Activated T-helper 1 cell treated with anti-CD3 and anti-CD28 coated beads, Interleukin-12 subunit alpha, Interleukin-12 subunit beta, Interleukin-2, Interleukin-4 antibody, amounts not matched to agents 30 ng/mL and 10 ng/mL and 1 ng/mL, durations not matched to agents 14 hours and 24 hours and 36 hours (primary cell): ENCODE measurements at regions of chr9 and their contacts with region 1.

Region 1: GRCh38 chr9:35603987-35604577 is 980 bp upstream of the TESK1 start:
- DNase-seq: peak; percentile 99
- H3K4me3 Mint-ChIP-seq: peak overlapping the region; percentile 91
- H3K27ac Mint-ChIP-seq: peak overlapping the region; percentile 99
- H3K4me1 Mint-ChIP-seq: peaks cover 34% of the 10 kb centered on the region
- H3K27me3 Mint-ChIP-seq: peaks cover 2% of the 10 kb centered on the region

Region 2: GRCh38 chr9:35481347-35481975 is 122.6 kb before region 1 on chr9:
- intact Hi-C with region 1: loop called (anchors 1 kb)
- DNase-seq: peak; percentile 12
- H3K4me3 Mint-ChIP-seq: no peak overlapping the region
- H3K27ac Mint-ChIP-seq: no peak overlapping the region
- H3K4me1 Mint-ChIP-seq: no peaks in the 10 kb centered on the region
- H3K27me3 Mint-ChIP-seq: peaks cover 7% of the 10 kb centered on the region

Region 3: DNA sequence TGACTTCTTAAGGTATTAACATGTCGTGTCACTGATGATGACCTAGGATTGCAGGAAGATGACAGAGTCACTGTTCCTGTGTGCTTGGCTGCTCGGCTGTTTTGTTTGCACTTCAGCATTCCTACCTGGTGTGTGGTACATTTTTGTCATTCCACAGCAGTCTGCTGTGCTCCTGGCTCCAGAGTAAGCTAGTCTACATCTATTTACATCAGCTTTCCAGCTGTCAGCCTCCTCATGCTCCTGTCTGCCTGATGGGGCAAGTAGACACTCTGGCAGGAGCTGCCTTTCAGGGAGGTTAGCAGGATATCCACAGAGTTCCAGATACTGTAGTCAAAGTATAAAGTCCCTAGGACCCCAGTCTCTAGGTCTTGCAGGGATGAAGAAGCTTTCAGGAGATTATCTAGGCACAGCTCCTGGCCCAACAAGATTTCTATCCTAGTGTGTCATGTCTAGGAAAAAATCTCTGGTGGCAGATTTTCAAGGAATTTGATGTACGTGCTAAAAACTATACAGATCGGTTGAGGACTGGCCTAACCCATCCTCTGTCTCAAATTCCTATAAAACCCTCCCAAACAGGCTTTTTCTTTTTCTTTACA is 85.8 kb before region 1 on chr9:
- intact Hi-C with region 1: no loop called
- DNase-seq: no peak
- H3K4me3 Mint-ChIP-seq: no peak overlapping the region
- H3K27ac Mint-ChIP-seq: no peak overlapping the region
- H3K4me1 Mint-ChIP-seq: no peaks in the 10 kb centered on the region
- H3K27me3 Mint-ChIP-seq: no peaks in the 10 kb centered on the region

Region 4: DNA sequence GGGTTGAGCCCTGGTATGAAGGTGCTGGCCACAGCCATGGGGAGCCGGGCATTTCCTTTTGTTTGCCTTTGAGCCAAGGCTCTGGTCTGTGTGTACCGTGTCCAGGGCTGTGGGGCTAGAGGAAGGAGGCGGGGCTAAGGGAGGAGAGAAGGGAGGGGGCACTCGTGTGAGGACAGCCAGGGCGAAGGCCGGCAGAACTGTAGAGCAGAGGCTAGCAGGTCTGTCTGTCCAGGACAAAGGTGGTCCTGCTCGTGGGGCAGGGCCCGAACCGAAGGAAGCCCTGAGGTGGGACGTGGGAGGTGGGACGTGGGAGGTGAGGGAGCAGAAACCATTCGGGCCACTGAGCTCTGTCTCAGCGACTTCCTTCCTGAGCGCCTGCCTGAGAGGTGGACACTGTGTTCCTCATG is 40.3 kb before region 1 on chr9:
- intact Hi-C with region 1: no loop called
- DNase-seq: no peak
- H3K4me3 Mint-ChIP-seq: no peak overlapping the region
- H3K27ac Mint-ChIP-seq: peak overlapping the region; percentile 36
- H3K4me1 Mint-ChIP-seq: peaks cover 15% of the 10 kb centered on the region
- H3K27me3 Mint-ChIP-seq: no peaks in the 10 kb centered on the region

Region 5: DNA sequence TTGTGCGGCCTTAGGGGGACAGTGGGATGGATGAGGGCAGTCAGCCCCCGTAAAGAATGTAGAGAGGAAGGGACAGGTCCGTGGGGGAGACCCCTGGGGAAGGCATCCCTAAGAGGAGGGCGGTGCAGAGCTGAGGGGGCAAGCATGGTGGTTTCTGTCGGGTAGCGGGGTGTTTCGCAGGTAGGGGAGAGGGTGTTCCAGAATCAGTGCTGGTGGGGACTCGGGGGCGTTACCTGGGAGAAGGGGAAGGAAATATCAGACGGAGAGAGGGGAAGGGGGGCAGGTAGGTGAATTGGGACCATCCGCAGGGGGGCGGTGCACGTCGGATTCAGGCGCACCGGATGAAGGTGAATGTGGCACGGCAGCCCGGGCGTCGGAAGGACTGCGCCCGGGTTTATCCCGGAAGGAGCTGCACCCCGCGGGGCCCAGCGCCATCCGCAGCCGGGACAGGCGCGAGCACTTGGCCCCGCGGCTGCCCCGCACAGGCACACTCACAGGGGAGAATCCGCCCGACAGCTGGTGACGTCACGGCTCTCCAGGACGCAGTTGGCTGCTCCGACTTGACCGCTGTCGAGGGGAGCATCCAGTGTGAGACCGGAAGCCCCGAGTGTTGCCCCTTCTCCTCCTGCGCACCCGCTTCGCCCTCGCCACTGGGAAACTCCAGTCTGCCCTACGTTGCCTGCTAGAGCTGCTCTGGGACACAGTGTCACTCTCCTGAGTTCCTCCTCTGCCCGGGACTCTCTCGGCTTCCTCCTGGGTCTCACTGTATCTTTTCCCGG is 12.8 kb after region 1 on chr9:
- intact Hi-C with region 1: loop called (anchors 1 kb)
- DNase-seq: peak; percentile 57
- H3K4me3 Mint-ChIP-seq: peak overlapping the region; percentile 69
- H3K27ac Mint-ChIP-seq: peak overlapping the region; percentile 92
- H3K4me1 Mint-ChIP-seq: peaks cover 65% of the 10 kb centered on the region
- H3K27me3 Mint-ChIP-seq: peaks cover 2% of the 10 kb centered on the region

Region 6: GRCh38 chr9:35657546-35658136 is 53.6 kb after region 1 on chr9 and contains the start of gene RMRP:
- intact Hi-C with region 1: loop called (anchors 1 kb)
- DNase-seq: peak; percentile 88
- H3K4me3 Mint-ChIP-seq: peak within 1 kb of the TSS; percentile 84
- H3K27ac Mint-ChIP-seq: peak within 1 kb of the TSS; percentile 99
- H3K4me1 Mint-ChIP-seq: peaks cover 59% of the 10 kb centered on the region
- H3K27me3 Mint-ChIP-seq: peaks cover 2% of the 10 kb centered on the region
- total RNA-seq, gene RMRP: 5,317 and 5,787 TPM in 2 replicates

Region 7: GRCh38 chr9:35696525-35697215 is 92.6 kb after region 1 on chr9:
- intact Hi-C with region 1: loop called (anchors 2 kb)
- DNase-seq: peak; percentile 23
- H3K4me3 Mint-ChIP-seq: no peak overlapping the region
- H3K27ac Mint-ChIP-seq: no peak overlapping the region
- H3K4me1 Mint-ChIP-seq: peaks cover 5% of the 10 kb centered on the region
- H3K27me3 Mint-ChIP-seq: no peaks in the 10 kb centered on the region

Region 8: GRCh38 chr9:35882263-35882848 is 278.3 kb after region 1 on chr9:
- intact Hi-C with region 1: loop called (anchors 2 kb)
- DNase-seq: peak; percentile 55
- H3K4me3 Mint-ChIP-seq: no peak overlapping the region
- H3K27ac Mint-ChIP-seq: no peak overlapping the region
- H3K4me1 Mint-ChIP-seq: no peaks in the 10 kb centered on the region
- H3K27me3 Mint-ChIP-seq: peaks cover 22% of the 10 kb centered on the region